ENCODE measurements at regions of chr11 and their contacts with region 1.

Region 1: DNA sequence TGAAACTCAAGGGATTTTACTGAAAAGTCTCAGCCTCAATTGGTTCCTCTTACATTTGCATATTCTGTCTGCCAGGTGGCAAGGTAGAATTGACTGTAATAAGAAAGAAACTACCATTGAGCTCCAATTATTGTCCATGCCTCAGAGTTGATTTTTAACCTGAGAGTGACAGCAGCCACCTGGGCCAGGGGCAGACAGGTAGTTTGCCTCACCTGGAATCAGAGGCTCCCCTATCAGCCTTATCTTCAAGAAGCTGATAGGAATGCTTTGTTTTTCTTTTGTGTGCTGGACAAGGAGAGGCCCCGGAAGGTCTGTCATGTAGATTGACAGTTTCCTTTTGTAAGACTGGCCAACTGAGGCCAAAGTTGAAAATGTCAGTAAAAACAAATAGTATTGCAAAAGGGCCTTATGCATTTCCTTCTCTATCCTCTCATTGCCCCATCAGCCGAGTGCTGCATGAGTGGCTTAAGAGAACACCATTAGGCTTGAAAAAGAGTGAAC is 34.1 kb downstream of the CD44 start:
- DNase-seq: peak; percentile 35
- ATAC-seq: no peak
- H3K4me3 ChIP-seq: no peak overlapping the region
- H3K27ac ChIP-seq: peak overlapping the region; percentile 39
- H3K4me1 ChIP-seq: peaks cover 43% of the 10 kb centered on the region
- H3K27me3 ChIP-seq: no peaks in the 10 kb centered on the region
- CTCF ChIP-seq: no peak

Region 2: DNA sequence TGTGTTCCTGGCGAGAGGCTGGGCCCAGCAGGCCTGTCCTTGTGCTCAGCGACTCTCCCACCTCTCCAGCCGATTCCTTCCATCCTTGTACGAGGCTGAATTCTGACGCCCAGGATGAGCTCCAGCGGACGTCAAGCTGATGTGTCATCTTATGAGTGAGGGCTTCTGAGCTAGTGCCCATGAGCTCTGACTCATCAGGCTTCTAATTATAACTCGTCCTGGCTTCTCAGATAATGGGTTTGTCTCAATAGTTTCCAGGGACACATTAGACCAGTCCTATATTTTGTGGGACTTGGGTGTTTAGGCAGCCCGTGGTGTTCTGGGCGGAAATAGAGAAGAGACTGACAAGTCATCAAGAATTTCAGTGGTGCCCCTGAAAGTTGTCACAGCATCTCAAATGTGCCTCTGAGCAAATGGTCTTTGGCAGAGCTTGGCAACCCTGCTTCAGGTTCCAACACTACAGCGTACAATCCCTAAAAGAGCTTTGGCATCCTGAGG is 142.3 kb before region 1 on chr11:
- CTCF ChIA-PET with region 1: interaction called, 12 read pairs
- POLR2A ChIA-PET with region 1: no interaction called
- intact Hi-C with region 1: no loop called
- DNase-seq: peak; percentile 96
- ATAC-seq: peak; percentile 95
- H3K4me3 ChIP-seq: peak overlapping the region; percentile 40; the same call in 1 of the 2 replicates
- H3K27ac ChIP-seq: peak overlapping the region; percentile 99
- H3K4me1 ChIP-seq: peaks cover 49% of the 10 kb centered on the region
- H3K27me3 ChIP-seq: no peaks in the 10 kb centered on the region
- CTCF ChIP-seq: no peak